SK-N-SH (cell line): ENCODE measurements at regions of chr19 and their contacts with region 1.

Region 1: GRCh38 chr19:1929021-1929742 is 11.8 kb upstream of the CSNK1G2 start:
- DNase-seq: peak; percentile 93
- H3K4me3 ChIP-seq: peak overlapping the region; percentile 36 to 64
- H3K27ac ChIP-seq: no peak overlapping the region
- H3K4me1 ChIP-seq: peaks cover 6 to 8% of the 10 kb centered on the region in 2 experiments; a peak in 2 of 4 replicates
- H3K27me3 ChIP-seq: no peaks in the 10 kb centered on the region
- CTCF ChIP-seq: peak; percentile 80
- EP300 ChIP-seq: no peak
- RAD21 ChIP-seq: peak; percentile 69

Region 2: GRCh38 chr19:1905071-1905862 is 23.9 kb before region 1 on chr19 and contains the starts of genes ADAT3 and SCAMP4:
- CTCF ChIA-PET with region 1: interaction called, 30 read pairs
- POLR2A ChIA-PET with region 1: interaction called, 3 read pairs
- DNase-seq: peak; percentile 98
- H3K4me3 ChIP-seq: peak within 1 kb of the TSS; percentile 63 to 67
- H3K27ac ChIP-seq: peak within 1 kb of the TSS; percentile 81 to 82
- H3K4me1 ChIP-seq: peaks cover 0 to 18% of the 10 kb centered on the region in 2 experiments; a peak in 1 of 4 replicates
- H3K27me3 ChIP-seq: no peaks in the 10 kb centered on the region
- CTCF ChIP-seq: no peak
- EP300 ChIP-seq: 0 out of 4 replicates have a peak, but pooled peaks of 1 of the 2 experiments have one; percentile 15
- RAD21 ChIP-seq: no peak
- polyA plus RNA-seq, gene ADAT3: 1.7 and 2.8 TPM in 2 replicates
- polyA plus RNA-seq, gene SCAMP4: 11.8 and 30.0 TPM in 2 replicates

Region 3: GRCh38 chr19:1913781-1914577 is 15.2 kb before region 1 on chr19:
- CTCF ChIA-PET with region 1: interaction called, 30 read pairs
- POLR2A ChIA-PET with region 1: interaction called, 3 read pairs
- DNase-seq: no peak
- H3K4me3 ChIP-seq: no peak overlapping the region
- H3K27ac ChIP-seq: no peak overlapping the region
- H3K4me1 ChIP-seq: peaks cover 0 to 11% of the 10 kb centered on the region in 2 experiments; a peak in 1 of 4 replicates
- H3K27me3 ChIP-seq: no peaks in the 10 kb centered on the region
- CTCF ChIP-seq: no peak
- EP300 ChIP-seq: no peak
- RAD21 ChIP-seq: no peak

Region 4: DNA sequence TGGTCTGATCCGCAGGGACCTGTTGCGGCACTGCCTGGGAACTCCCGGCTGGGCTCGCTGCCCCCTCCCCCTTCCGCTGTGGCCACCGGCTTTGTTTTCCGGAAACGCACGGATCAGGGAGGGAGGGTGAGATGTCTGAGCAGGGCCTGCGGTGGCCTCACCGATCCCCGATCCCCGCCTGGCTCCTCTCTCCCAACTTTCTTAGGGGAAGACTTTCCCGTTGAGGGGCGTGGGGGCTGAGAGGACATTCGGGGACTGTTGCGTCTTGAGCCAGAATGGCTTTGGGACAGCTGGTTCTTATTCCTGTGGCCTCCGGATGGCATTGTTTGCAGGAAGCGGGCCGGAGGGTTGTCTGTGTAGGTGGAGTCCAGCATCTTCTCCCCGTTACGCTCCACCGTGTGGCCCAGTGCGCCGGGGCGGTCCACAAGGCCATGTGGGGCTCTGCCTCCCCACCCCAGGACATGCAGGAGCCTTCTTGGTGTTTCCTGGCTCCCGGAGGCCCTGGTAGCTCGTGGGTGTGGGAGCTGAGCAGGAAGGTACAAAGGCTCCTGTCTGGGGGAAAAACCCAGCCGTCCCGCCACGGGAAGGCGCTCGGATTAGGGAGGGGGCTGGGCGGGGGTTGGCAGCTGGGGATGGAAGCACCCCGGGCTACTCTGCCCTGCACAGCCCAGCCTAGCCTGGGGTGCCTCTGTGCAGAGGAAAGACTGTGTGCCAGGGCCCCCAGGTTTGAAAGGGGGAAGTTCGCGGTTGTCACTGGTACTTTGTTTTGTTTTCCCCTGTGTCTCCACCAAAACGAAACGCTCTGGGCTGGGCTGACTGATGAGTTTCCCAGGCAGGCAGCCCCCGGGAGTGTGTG is 13.1 kb after region 1 on chr19:
- CTCF ChIA-PET with region 1: interaction called, 15 read pairs
- POLR2A ChIA-PET with region 1: no interaction called
- DNase-seq: peak; percentile 89
- H3K4me3 ChIP-seq: peak overlapping the region; percentile 56 to 90
- H3K27ac ChIP-seq: peak overlapping the region; percentile 82 to 94
- H3K4me1 ChIP-seq: peaks cover 6 to 27% of the 10 kb centered on the region in 2 experiments; a peak in 3 of 4 replicates
- H3K27me3 ChIP-seq: no peaks in the 10 kb centered on the region
- CTCF ChIP-seq: no peak
- EP300 ChIP-seq: no peak
- RAD21 ChIP-seq: no peak

Region 5: GRCh38 chr19:2016041-2016807 is 87.0 kb after region 1 on chr19:
- CTCF ChIA-PET with region 1: interaction called, 10 read pairs
- POLR2A ChIA-PET with region 1: no interaction called
- DNase-seq: peak; percentile 87
- H3K4me3 ChIP-seq: peak overlapping the region; percentile 37 to 50
- H3K27ac ChIP-seq: peak overlapping the region; percentile 48 to 89; a peak in 3 of 4 replicates
- H3K4me1 ChIP-seq: peaks cover 4 to 18% of the 10 kb centered on the region in 2 experiments; a peak in 2 of 4 replicates
- H3K27me3 ChIP-seq: no peaks in the 10 kb centered on the region
- CTCF ChIP-seq: no peak
- EP300 ChIP-seq: peak in 1 of 2 experiments; percentile 64; a peak in 2 of 4 replicates
- RAD21 ChIP-seq: no peak